ENCODE measurements at regions of chr16 and their contacts with region 1.

Region 1: GRCh38 chr16:12971241-12971640 is 69.8 kb downstream of the SHISA9 start:
- DNase-seq: no peak
- ATAC-seq: no peak
- H3K4me3 ChIP-seq: no peak overlapping the region
- H3K27ac ChIP-seq: no peak overlapping the region
- H3K4me1 ChIP-seq: no peaks in the 10 kb centered on the region
- H3K27me3 ChIP-seq: no peaks in the 10 kb centered on the region
- CTCF ChIP-seq: no peak
- POLR2A ChIP-seq: no peak

Region 2: GRCh38 chr16:13036600-13036999 is 65.4 kb after region 1 on chr16:
- intact Hi-C with region 1: loop called in 1 of 2 experiments (anchors 10 kb)
- DNase-seq: peak in 2 of 3 donors; percentile 38 to 49
- ATAC-seq: no peak
- H3K4me3 ChIP-seq: no peak overlapping the region
- H3K27ac ChIP-seq: no peak overlapping the region
- H3K4me1 ChIP-seq: no peaks in the 10 kb centered on the region
- H3K27me3 ChIP-seq: no peaks in the 10 kb centered on the region
- CTCF ChIP-seq: no peak
- POLR2A ChIP-seq: no peak

Measured in right lobe of liver (tissue), 6 donors.